GM10248 (cell line): ENCODE measurements at regions of chr13 and their contacts with region 1.

Region 1: DNA sequence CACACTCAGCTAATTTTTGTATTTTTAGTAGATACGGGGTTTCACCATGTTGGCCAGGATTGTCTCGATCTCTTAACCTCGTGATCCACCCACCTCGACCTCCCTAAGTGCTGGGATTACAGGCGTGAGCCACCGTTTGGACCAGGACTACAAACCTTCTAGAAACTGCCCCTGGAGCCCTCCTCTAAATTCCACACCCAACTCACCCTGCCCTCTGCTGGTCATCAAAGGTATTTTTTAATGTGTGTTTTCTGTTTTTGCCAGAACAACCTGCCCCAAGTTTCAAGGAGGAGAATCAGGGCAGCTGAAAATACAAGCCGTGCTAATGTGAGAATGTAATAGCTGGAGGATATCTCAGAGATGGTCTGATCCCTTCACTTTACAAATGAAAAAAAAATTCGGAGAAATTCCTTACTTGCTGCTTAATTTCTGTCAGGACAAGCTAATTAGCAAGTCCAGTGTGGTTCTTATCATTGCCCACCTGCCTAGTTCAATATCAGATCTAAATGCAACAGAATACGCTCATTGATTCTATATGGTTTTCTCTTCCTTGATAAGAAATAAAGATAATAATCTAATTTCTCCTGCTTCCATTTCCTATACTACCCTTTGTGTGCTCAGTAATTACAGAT is 4.1 kb downstream of the ATP8A2 start:
- DNase-seq: peak; percentile 65
- CTCF ChIP-seq: peak; percentile 59

Region 2: DNA sequence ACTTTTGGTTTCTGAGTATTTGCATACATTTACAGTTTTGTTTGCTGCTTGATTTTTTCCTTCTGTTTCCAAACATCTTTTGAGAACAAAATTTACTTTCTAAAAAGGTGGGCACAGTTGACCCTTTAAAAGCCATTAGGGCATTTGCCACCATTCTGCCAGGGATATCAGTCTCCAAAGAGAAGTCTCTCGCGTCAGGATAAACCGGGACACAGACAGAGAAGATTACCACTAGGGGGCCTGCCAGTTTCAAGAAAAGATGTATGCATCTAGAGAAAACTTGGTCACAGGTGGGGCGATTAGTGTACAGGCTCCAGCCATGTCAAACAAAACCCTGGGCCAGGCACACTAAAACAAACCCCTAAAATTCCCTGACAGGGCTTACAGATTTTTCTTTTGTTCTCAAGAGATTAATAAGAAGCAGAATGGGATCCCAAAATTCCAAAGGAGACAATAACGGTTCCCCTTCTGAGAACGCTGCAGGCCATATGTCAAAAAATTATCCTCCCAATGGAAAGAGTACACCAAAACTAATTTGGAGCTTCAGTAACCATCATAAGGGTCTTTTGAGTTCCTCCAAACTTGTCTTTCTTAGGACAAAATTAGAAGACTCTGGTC is 290.6 kb before region 1 on chr13:
- CTCF ChIA-PET with region 1: interaction called, 13 read pairs
- POLR2A ChIA-PET with region 1: no interaction called
- DNase-seq: peak; percentile 56
- CTCF ChIP-seq: peak; percentile 70

Region 3: GRCh38 chr13:25232937-25233515 is 142.8 kb before region 1 on chr13:
- CTCF ChIA-PET with region 1: interaction called, 17 read pairs
- POLR2A ChIA-PET with region 1: no interaction called
- DNase-seq: peak; percentile 54
- CTCF ChIP-seq: peak; percentile 57

Region 4: DNA sequence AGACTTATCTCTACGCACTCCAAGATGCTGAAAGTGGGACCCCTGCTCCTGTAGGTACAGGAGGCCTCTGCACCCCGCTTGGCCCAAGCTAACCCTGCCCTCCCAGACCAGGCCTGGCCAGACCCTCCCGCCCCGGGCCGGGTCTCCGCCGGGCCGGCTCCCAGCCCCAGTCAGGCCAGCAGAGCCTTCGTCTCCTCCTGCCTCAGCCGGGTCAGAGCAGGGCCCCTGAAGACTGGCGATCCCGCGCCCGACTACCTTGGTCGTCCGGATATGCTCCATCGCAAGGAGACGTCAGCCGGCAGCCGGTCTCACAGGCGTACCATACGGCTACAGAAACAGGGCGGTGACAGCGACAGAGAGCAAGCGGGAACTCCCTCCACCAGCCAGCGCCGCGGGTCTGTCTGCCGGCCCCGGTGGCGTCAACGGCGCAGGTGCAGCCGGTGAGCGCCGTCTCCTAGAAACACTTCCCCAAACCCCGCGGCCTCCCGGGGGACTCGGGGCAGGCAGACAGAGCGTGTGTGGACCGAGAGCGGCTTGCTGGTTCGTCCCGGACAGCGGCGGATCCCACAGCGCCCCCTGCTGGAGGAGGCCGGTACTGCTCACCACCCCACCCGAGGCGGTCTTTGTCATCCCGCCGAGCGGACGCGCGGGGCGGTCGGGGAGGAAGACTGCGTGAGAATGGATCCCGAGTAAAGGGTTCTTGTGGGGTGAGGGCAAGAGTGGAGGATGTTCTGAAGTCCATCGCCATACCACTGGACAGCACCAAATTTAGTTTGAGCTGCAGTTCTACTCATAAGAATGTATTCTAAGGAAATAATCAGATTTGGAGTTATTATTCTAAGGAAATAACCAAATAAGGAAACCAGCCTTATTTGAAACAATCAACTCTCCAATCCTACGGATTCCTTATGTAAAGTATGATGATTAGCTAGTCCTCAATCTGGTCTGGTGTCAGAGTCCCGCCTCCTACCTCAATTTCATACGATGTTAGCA is 88.6 kb before region 1 on chr13 and contains the start of gene MTMR6:
- CTCF ChIA-PET with region 1: no interaction called
- POLR2A ChIA-PET with region 1: no interaction called
- DNase-seq: peak; percentile 96
- CTCF ChIP-seq: peak; percentile 93

Region 5: GRCh38 chr13:25330541-25330940 is 45.3 kb before region 1 on chr13:
- CTCF ChIA-PET with region 1: no interaction called
- POLR2A ChIA-PET with region 1: no interaction called
- DNase-seq: no peak
- CTCF ChIP-seq: no peak

Region 6: GRCh38 chr13:25352806-25353205 is 23.0 kb before region 1 on chr13:
- CTCF ChIA-PET with region 1: interaction called, 13 read pairs
- POLR2A ChIA-PET with region 1: no interaction called
- DNase-seq: no peak
- CTCF ChIP-seq: no peak

Region 7: GRCh38 chr13:25391932-25392331 is 16.1 kb after region 1 on chr13:
- CTCF ChIA-PET with region 1: interaction called, 28 read pairs
- POLR2A ChIA-PET with region 1: no interaction called
- DNase-seq: no peak
- CTCF ChIP-seq: no peak